Activated CD4-positive, alpha-beta memory T cell treated with anti-CD3 and anti-CD28 coated beads for 36 hours (primary cell): ENCODE measurements at regions of chr16 and their contacts with region 1.

Region 1: DNA sequence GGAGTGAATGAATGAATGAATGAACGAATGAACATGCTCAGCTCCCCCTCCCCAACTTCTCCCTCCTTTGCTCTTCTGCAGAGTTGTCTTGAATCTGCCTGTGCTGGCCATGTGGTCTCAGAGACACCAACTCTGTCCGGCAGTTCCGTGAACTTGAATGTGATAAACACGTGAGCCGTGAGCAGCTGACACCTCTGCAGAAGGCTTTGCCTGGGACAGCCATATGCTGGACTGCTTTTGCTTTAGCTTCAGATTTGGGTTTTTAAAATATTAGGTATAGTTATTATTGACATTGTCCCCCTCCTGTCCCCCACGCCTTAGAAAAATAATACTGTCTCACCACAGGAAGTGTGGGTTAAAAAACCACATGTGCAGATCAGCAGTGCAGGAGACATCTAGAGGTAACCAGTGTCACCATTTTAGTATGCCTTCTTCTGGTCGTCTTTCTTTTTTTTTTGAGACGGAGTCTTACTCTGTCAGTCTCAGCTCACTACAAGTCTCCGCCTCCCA is 83.8 kb downstream of the ABCC1 start:
- DNase-seq: peak; percentile 22
- H3K4me3 Mint-ChIP-seq: no peak overlapping the region
- H3K27ac Mint-ChIP-seq: peak overlapping the region; percentile 62
- H3K4me1 Mint-ChIP-seq: peaks cover 20% of the 10 kb centered on the region
- H3K27me3 Mint-ChIP-seq: no peaks in the 10 kb centered on the region

Region 2: GRCh38 chr16:15822957-15823356 is 210.3 kb before region 1 on chr16:
- CTCF ChIA-PET with region 1: no interaction called
- POLR2A ChIA-PET with region 1: no interaction called
- intact Hi-C with region 1: no loop called
- DNase-seq: no peak
- H3K4me3 Mint-ChIP-seq: no peak overlapping the region
- H3K27ac Mint-ChIP-seq: no peak overlapping the region
- H3K4me1 Mint-ChIP-seq: no peaks in the 10 kb centered on the region
- H3K27me3 Mint-ChIP-seq: peaks cover 2% of the 10 kb centered on the region

Region 3: GRCh38 chr16:15874745-15875314 is 158.4 kb before region 1 on chr16:
- CTCF ChIA-PET with region 1: interaction called, 12 read pairs
- POLR2A ChIA-PET with region 1: no interaction called
- intact Hi-C with region 1: no loop called
- DNase-seq: no peak
- H3K4me3 Mint-ChIP-seq: no peak overlapping the region
- H3K27ac Mint-ChIP-seq: no peak overlapping the region
- H3K4me1 Mint-ChIP-seq: peaks cover 8% of the 10 kb centered on the region
- H3K27me3 Mint-ChIP-seq: no peaks in the 10 kb centered on the region